ENCODE measurements at regions of chr20 and their contacts with region 1.

Region 1: DNA sequence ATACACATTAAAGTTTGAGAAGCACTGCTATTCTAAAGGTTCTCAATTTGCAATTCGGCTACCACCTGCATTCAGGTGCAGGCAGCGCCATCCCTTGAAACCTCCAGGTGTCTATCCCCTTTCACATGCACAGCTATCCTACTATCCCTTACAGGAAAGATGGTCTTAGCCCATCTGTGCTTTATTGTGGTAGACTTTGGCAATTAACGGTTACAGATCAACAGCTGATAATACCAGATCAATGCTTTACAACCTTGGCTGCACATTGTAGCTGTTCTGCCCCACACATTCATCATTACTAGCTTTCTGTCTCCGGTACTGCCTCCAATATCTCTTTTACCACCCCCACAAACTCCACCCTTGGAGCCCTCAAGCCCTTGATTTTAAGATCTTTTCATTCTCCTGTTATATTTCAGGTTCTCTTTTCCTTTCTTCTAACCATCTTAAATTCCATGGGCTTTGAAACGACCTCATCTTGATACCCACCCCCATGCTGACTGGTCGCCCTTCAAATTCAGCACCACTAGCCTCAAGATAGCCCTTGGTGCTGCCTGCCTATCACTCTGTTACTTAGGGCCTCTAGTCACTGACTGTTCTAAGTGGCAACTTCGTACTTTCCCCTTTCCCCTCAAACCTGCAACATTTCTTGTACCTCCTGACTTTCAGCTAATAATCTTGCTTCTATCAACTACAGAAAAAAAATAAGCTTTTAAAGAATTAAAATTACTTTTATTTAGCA is 50.8 kb downstream of the SPTLC3 start:
- DNase-seq: no peak
- ATAC-seq: no peak
- H3K4me3 Mint-ChIP-seq: no peak overlapping the region
- H3K27ac Mint-ChIP-seq: no peak overlapping the region
- H3K4me1 Mint-ChIP-seq: no peaks in the 10 kb centered on the region
- H3K27me3 Mint-ChIP-seq: no peaks in the 10 kb centered on the region

Region 2: DNA sequence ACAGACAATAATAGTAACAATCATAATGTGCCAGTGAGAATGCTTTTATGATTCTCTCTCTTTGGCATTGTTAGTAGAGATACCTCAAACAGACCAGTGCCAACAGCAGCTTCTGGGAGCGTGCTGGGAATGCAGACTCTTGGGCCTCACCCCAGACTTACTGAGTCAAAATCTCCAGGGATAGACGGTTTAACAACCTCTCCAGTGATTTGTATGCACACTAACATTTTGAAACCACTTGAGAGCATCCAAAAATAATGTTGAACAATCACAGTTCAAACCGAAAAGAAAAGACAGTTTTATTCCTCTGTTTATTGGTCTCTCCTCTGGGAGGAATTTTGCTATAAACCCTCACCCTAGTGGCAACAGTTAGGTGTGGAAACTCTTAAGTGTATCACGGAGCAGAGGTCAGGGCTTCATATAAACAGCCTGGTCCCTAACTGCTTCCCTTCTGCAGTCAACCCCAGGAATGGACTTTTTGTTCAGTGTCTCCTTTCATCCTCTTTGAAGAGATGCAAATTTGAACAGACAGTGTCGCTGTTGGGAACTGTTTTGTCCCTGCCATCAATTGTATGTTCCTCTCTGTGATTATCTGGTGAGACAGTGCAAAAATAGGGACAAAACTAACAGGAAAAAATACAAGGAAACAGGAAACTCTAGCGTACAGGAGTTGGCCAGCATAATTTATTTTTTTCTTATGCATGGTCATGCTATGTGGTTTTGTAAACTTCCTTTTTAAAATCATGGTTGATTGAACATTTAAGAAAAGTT is 1304.3 kb before region 1 on chr20:
- CTCF ChIA-PET with region 1: no interaction called
- POLR2A ChIA-PET with region 1: no interaction called
- intact Hi-C with region 1: no loop called
- DNase-seq: no peak
- ATAC-seq: no peak
- H3K4me3 Mint-ChIP-seq: no peak overlapping the region
- H3K27ac Mint-ChIP-seq: no peak overlapping the region
- H3K4me1 Mint-ChIP-seq: no peaks in the 10 kb centered on the region
- H3K27me3 Mint-ChIP-seq: no peaks in the 10 kb centered on the region

Region 3: DNA sequence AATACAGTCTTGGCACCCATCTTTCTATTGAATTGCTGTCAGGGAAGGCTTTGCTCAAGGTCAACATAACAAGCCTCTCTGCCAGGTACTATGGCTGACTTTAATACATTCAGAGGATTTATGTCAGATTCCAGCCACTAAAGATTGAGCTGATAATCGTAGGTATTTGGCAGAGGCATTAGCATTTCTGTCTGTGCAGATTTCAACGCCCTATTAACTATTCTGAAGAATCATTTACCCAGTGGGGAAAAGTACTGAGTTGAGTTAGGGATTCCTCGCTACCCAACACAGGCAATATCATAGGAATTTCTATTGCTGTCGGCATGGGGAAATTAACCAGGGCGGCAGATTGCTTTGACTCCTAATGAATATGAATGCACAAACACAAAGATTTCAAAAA is 284.5 kb before region 1 on chr20:
- CTCF ChIA-PET with region 1: no interaction called
- POLR2A ChIA-PET with region 1: no interaction called
- intact Hi-C with region 1: no loop called
- DNase-seq: no peak
- ATAC-seq: no peak
- H3K4me3 Mint-ChIP-seq: no peak overlapping the region
- H3K27ac Mint-ChIP-seq: no peak overlapping the region
- H3K4me1 Mint-ChIP-seq: no peaks in the 10 kb centered on the region
- H3K27me3 Mint-ChIP-seq: no peaks in the 10 kb centered on the region

Region 4: GRCh38 chr20:12936036-12936435 is 123.5 kb before region 1 on chr20:
- CTCF ChIA-PET with region 1: no interaction called
- POLR2A ChIA-PET with region 1: no interaction called
- intact Hi-C with region 1: loop called in 1 of 2 experiments (anchors 5 kb)
- DNase-seq: no peak
- ATAC-seq: no peak
- H3K4me3 Mint-ChIP-seq: no peak overlapping the region
- H3K27ac Mint-ChIP-seq: no peak overlapping the region
- H3K4me1 Mint-ChIP-seq: no peaks in the 10 kb centered on the region
- H3K27me3 Mint-ChIP-seq: no peaks in the 10 kb centered on the region

Region 5: DNA sequence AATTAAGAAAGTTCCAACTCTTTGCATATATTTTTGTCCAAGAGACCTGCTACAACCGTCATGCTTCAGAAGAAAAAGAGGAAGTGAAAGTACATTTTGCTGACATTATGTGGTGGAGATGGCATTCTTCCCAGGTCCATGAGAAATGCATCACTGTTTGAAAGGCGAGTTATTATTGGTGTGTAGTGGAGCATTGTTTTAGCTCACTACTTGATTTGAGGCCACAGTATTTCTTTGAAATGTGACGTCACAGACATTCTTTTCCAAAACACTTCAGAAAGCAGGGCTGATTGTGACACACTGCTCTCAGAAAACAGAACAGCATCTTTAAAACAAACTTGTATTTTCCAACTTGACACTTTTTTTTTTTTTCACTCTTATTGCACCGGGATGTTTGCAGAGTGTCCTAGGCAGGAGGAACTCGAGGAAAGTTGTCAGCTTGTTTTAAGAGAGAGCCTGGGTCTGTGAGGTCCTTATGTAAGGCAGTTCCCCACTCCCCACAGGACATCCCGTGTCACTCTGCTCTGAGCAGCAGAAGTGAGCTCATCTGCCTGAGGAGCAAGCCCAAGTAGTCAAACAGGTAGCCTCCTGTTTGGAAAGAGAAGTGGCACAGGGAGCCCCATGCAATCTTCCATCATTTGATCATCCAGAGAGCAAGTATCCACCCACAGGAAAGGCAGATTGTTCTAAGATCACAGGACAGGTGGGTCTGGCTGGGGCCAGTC is 49.7 kb before region 1 on chr20:
- CTCF ChIA-PET with region 1: no interaction called
- POLR2A ChIA-PET with region 1: no interaction called
- intact Hi-C with region 1: no loop called
- DNase-seq: peak; percentile 22
- ATAC-seq: peak; percentile 76
- H3K4me3 Mint-ChIP-seq: peak overlapping the region; percentile 70
- H3K27ac Mint-ChIP-seq: peak overlapping the region; percentile 80
- H3K4me1 Mint-ChIP-seq: peaks cover 42% of the 10 kb centered on the region
- H3K27me3 Mint-ChIP-seq: no peaks in the 10 kb centered on the region

Region 6: GRCh38 chr20:13029687-13030510 is 29.7 kb before region 1 on chr20:
- CTCF ChIA-PET with region 1: no interaction called
- POLR2A ChIA-PET with region 1: no interaction called
- intact Hi-C with region 1: no loop called
- DNase-seq: peak; percentile 33
- ATAC-seq: peak; percentile 61
- H3K4me3 Mint-ChIP-seq: no peak overlapping the region
- H3K27ac Mint-ChIP-seq: no peak overlapping the region
- H3K4me1 Mint-ChIP-seq: no peaks in the 10 kb centered on the region
- H3K27me3 Mint-ChIP-seq: no peaks in the 10 kb centered on the region

Measured in activated CD4-positive, alpha-beta T cell treated with anti-CD3 and anti-CD28 coated beads for 36 hours (primary cell).